HEK293 (cell line): ENCODE measurements at regions of chr1 and their contacts with region 1.

Region 1: DNA sequence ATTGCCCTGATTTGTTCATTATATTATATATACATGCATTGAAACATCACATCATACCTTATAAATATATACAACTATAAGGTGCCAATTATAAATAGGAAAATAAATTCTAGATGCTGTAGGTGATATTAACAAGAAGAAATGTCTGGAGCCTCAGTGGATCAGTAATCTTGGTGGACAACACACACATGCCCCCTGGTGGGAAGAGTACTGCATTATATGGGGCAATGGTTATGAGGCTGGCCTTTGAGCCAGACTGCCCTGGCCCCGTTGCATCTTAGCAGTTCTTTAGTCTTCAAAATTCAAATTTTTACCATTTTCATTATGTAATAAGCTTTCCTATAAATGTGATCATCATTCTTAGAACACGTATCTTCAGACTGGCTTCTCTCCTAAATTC is 335.0 kb upstream of the GREM2 start:
- H3K4me3 ChIP-seq: no peak overlapping the region
- H3K27ac ChIP-seq: no peak overlapping the region
- H3K4me1 ChIP-seq: no peaks in the 10 kb centered on the region
- CTCF ChIP-seq: peak; percentile 34; the same call in 1 of the 2 replicates

Region 2: GRCh38 chr1:240888039-240888786 is 58.7 kb before region 1 on chr1:
- CTCF ChIA-PET with region 1: interaction called, 26 read pairs
- POLR2A ChIA-PET with region 1: no interaction called
- H3K4me3 ChIP-seq: no peak overlapping the region
- H3K27ac ChIP-seq: no peak overlapping the region
- H3K4me1 ChIP-seq: no peaks in the 10 kb centered on the region
- CTCF ChIP-seq: peak; percentile 87

Region 3: GRCh38 chr1:240967070-240967724 is 20.3 kb after region 1 on chr1:
- CTCF ChIA-PET with region 1: interaction called, 15 read pairs
- POLR2A ChIA-PET with region 1: no interaction called
- H3K4me3 ChIP-seq: no peak overlapping the region
- H3K27ac ChIP-seq: no peak overlapping the region
- H3K4me1 ChIP-seq: no peaks in the 10 kb centered on the region
- CTCF ChIP-seq: no peak

Region 4: DNA sequence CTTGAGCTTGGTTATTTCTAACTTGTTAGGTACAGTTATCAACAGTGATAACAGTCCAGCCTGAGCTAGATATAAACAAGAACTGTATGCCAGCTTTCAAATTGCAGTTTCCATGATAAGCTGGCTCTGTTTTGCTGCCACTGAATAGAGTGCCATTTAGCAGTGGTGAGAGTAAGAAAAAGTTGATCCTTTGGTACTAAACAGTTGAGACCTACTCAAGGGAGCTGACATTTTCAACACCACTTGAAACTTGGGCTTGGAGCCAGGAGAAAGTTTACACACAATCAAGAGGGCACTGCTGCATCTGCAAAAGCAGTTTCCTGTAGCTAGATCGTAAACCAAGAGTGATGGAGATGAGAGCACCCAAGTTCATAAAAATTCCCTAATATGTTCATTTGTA is 278.8 kb after region 1 on chr1:
- CTCF ChIA-PET with region 1: no interaction called
- POLR2A ChIA-PET with region 1: no interaction called
- H3K4me3 ChIP-seq: no peak overlapping the region
- H3K27ac ChIP-seq: no peak overlapping the region
- H3K4me1 ChIP-seq: peaks cover 12% of the 10 kb centered on the region; the same call in 1 of the 2 replicates
- CTCF ChIP-seq: no peak